Activated CD4-positive, alpha-beta memory T cell treated with anti-CD3 and anti-CD28 coated beads for 36 hours (primary cell): ENCODE measurements at regions of chr17 and their contacts with region 1.

Region 1: GRCh38 chr17:64145757-64146417 is 15.9 kb upstream of the ERN1 start:
- DNase-seq: peak; percentile 96
- H3K4me3 Mint-ChIP-seq: no peak overlapping the region
- H3K27ac Mint-ChIP-seq: no peak overlapping the region
- H3K4me1 Mint-ChIP-seq: peaks cover 23% of the 10 kb centered on the region
- H3K27me3 Mint-ChIP-seq: no peaks in the 10 kb centered on the region

Region 2: GRCh38 chr17:64063766-64064224 is 82.1 kb before region 1 on chr17:
- CTCF ChIA-PET with region 1: interaction called, 5 read pairs
- POLR2A ChIA-PET with region 1: interaction called, 14 read pairs
- intact Hi-C with region 1: no loop called
- DNase-seq: peak; percentile 74
- H3K4me3 Mint-ChIP-seq: peak overlapping the region; percentile 64
- H3K27ac Mint-ChIP-seq: peak overlapping the region; percentile 93
- H3K4me1 Mint-ChIP-seq: peaks cover 88% of the 10 kb centered on the region
- H3K27me3 Mint-ChIP-seq: no peaks in the 10 kb centered on the region

Region 3: GRCh38 chr17:64073771-64074703 is 71.8 kb before region 1 on chr17:
- CTCF ChIA-PET with region 1: no interaction called
- POLR2A ChIA-PET with region 1: no interaction called
- intact Hi-C with region 1: no loop called
- DNase-seq: no peak
- H3K4me3 Mint-ChIP-seq: no peak overlapping the region
- H3K27ac Mint-ChIP-seq: no peak overlapping the region
- H3K4me1 Mint-ChIP-seq: peaks cover 23% of the 10 kb centered on the region
- H3K27me3 Mint-ChIP-seq: no peaks in the 10 kb centered on the region

Region 4: GRCh38 chr17:64095144-64095882 is 50.6 kb before region 1 on chr17:
- CTCF ChIA-PET with region 1: no interaction called
- POLR2A ChIA-PET with region 1: no interaction called
- intact Hi-C with region 1: no loop called
- DNase-seq: peak; percentile 51
- H3K4me3 Mint-ChIP-seq: no peak overlapping the region
- H3K27ac Mint-ChIP-seq: peak overlapping the region; percentile 63
- H3K4me1 Mint-ChIP-seq: peaks cover 83% of the 10 kb centered on the region
- H3K27me3 Mint-ChIP-seq: no peaks in the 10 kb centered on the region

Region 5: DNA sequence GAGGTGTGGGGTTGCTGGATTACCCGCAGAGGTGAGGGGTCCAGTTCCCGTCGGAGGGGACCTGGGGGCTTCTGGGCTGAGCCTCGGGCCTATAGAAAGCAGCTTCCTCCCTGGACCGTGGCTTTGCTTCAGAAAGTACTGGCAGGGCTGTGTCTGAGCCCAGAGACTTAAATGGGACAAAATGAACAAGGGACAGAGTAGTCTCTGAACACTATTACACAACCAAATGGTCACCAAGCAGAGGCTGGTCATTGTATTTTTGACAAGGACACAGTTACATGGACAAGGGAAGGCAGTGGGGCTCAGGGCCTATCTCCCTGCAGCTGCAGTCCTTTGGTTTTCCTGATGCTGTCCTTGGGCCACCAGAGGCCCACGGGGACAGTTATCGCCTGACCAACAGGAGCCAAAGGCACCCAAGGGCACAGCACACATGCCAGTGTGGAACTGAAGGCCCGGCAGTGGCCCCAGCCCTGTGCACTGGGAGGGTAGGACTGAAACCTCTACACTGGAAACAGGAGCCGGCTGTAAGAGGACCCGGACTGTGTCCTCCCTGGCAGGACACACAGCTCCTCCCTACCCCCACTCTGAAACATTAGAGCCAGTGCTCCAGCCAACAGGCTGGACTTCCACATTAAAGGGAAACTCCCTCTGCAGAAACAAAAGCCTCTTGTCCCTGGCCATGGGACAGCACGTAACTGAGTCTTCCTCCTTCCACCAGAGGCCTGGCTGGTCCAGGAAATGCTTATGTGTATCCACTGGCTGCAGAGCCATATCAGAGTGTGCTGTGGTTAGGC is 10.1 kb after region 1 on chr17:
- CTCF ChIA-PET with region 1: no interaction called
- POLR2A ChIA-PET with region 1: interaction called, 13 read pairs
- intact Hi-C with region 1: no loop called
- DNase-seq: no peak
- H3K4me3 Mint-ChIP-seq: no peak overlapping the region
- H3K27ac Mint-ChIP-seq: no peak overlapping the region
- H3K4me1 Mint-ChIP-seq: peaks cover 3% of the 10 kb centered on the region
- H3K27me3 Mint-ChIP-seq: no peaks in the 10 kb centered on the region

Region 6: GRCh38 chr17:64167678-64168077 is 21.8 kb after region 1 on chr17:
- CTCF ChIA-PET with region 1: no interaction called
- POLR2A ChIA-PET with region 1: no interaction called
- intact Hi-C with region 1: no loop called
- DNase-seq: no peak
- H3K4me3 Mint-ChIP-seq: no peak overlapping the region
- H3K27ac Mint-ChIP-seq: no peak overlapping the region
- H3K4me1 Mint-ChIP-seq: no peaks in the 10 kb centered on the region
- H3K27me3 Mint-ChIP-seq: no peaks in the 10 kb centered on the region

Region 7: GRCh38 chr17:64216338-64217248 is 70.7 kb after region 1 on chr17:
- CTCF ChIA-PET with region 1: no interaction called
- POLR2A ChIA-PET with region 1: interaction called, 6 read pairs
- intact Hi-C with region 1: loop called (anchors 5 kb)
- DNase-seq: no peak
- H3K4me3 Mint-ChIP-seq: no peak overlapping the region
- H3K27ac Mint-ChIP-seq: no peak overlapping the region
- H3K4me1 Mint-ChIP-seq: peaks cover 20% of the 10 kb centered on the region
- H3K27me3 Mint-ChIP-seq: no peaks in the 10 kb centered on the region

Region 8: GRCh38 chr17:64281962-64282727 is 136.3 kb after region 1 on chr17:
- CTCF ChIA-PET with region 1: interaction called, 45 read pairs
- POLR2A ChIA-PET with region 1: interaction called, 9 read pairs
- intact Hi-C with region 1: loop called (anchors 1 kb)
- DNase-seq: peak; percentile 63
- H3K4me3 Mint-ChIP-seq: no peak overlapping the region
- H3K27ac Mint-ChIP-seq: no peak overlapping the region
- H3K4me1 Mint-ChIP-seq: peaks cover 6% of the 10 kb centered on the region
- H3K27me3 Mint-ChIP-seq: no peaks in the 10 kb centered on the region